MCF 10A (cell line): ENCODE measurements at regions of chr3 and their contacts with region 1.

Region 1: GRCh38 chr3:70120357-70121121 is 121.0 kb downstream of the SAMMSON start:
- DNase-seq: peak; percentile 82
- H3K4me3 Mint-ChIP-seq: no peak overlapping the region
- H3K27ac Mint-ChIP-seq: no peak overlapping the region
- H3K4me1 Mint-ChIP-seq: no peaks in the 10 kb centered on the region
- H3K27me3 Mint-ChIP-seq: peaks cover 63% of the 10 kb centered on the region
- CTCF ChIP-seq: peak; percentile 73

Region 2: DNA sequence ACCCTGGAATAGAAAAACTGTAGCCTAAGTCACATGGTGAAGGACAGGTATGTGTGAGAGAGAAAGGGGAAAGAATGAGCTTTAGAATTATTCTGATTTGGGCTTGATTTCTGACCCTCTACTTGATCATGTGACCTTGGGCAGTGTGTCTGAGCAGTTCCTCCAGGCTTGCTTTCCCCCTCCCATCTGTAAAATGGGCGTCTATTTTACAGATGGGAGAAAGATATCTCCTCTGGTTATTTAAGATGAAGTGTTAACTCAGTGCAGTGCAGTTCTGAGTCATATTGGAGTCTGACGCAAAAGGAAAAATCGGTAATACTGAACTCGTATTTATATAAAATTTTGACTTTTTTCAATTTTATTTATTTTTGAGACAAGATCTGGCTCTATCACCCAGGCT is 960.0 kb before region 1 on chr3:
- CTCF ChIA-PET with region 1: no interaction called
- POLR2A ChIA-PET with region 1: no interaction called
- intact Hi-C with region 1: no loop called
- DNase-seq: no peak
- H3K4me3 Mint-ChIP-seq: no peak overlapping the region
- H3K27ac Mint-ChIP-seq: no peak overlapping the region
- H3K4me1 Mint-ChIP-seq: no peaks in the 10 kb centered on the region
- H3K27me3 Mint-ChIP-seq: no peaks in the 10 kb centered on the region
- CTCF ChIP-seq: no peak

Region 3: DNA sequence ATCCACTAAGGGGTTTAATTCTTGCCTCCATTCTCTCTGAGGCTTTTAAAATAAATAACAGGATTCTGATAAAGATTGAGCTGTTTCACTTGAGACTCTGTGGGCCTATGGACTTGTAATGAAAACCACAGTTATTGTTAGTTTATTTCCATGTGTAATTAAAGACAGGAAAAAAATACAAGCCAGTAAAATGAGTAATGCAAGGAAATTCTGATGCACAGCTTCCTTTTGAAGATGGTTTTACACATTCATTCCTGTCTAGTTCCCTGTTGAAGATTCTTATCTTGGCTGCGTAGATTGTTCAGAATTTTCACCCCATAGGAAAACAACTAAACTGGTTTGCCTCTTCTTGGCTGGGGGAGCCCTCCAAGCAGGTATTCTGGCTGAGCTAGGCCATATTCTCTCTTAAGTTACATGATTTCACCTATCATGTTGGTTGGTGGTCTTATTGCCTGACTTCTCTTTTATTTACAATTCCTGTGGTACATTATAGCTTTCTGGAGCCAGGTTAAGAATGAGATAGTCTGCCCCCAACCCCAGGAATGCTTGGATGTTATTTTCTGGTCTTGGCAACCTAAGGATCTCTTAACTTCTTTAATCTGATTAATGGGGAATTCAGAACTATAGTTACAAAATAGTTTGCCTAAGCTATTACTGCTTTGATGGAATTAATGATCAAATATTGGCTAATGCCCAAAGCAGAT is 313.7 kb before region 1 on chr3:
- CTCF ChIA-PET with region 1: no interaction called
- POLR2A ChIA-PET with region 1: no interaction called
- intact Hi-C with region 1: no loop called
- DNase-seq: no peak
- H3K4me3 Mint-ChIP-seq: no peak overlapping the region
- H3K27ac Mint-ChIP-seq: no peak overlapping the region
- H3K4me1 Mint-ChIP-seq: peaks cover 6% of the 10 kb centered on the region
- H3K27me3 Mint-ChIP-seq: no peaks in the 10 kb centered on the region
- CTCF ChIP-seq: no peak

Region 4: DNA sequence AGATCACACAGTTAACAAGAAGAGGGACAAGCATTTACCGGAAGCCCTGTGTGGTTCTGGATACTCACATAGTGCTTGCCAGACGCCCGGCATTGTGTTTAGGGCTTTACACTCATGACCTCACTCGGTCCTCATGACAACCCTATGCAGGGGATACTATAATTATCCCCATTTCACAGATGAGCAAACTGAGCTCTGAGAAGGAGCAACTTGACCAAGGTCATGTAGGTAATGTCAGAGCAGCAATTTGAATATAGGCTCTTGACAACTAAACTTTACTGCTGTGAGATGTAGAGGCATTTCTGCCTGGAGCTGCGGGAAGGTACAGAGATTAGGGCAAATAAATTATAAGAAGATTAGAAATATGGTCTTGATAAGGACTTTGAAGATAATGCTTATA is 51.0 kb before region 1 on chr3:
- CTCF ChIA-PET with region 1: no interaction called
- POLR2A ChIA-PET with region 1: no interaction called
- intact Hi-C with region 1: no loop called
- DNase-seq: no peak
- H3K4me3 Mint-ChIP-seq: no peak overlapping the region
- H3K27ac Mint-ChIP-seq: no peak overlapping the region
- H3K4me1 Mint-ChIP-seq: no peaks in the 10 kb centered on the region
- H3K27me3 Mint-ChIP-seq: peaks cover 95% of the 10 kb centered on the region
- CTCF ChIP-seq: no peak

Region 5: GRCh38 chr3:70108072-70108471 is 12.5 kb before region 1 on chr3:
- CTCF ChIA-PET with region 1: interaction called, 19 read pairs
- POLR2A ChIA-PET with region 1: no interaction called
- intact Hi-C with region 1: no loop called
- DNase-seq: peak; percentile 53
- H3K4me3 Mint-ChIP-seq: no peak overlapping the region
- H3K27ac Mint-ChIP-seq: no peak overlapping the region
- H3K4me1 Mint-ChIP-seq: no peaks in the 10 kb centered on the region
- H3K27me3 Mint-ChIP-seq: peaks cover 74% of the 10 kb centered on the region
- CTCF ChIP-seq: peak; percentile 31

Region 6: GRCh38 chr3:70358978-70359580 is 238.5 kb after region 1 on chr3:
- CTCF ChIA-PET with region 1: interaction called, 6 read pairs
- POLR2A ChIA-PET with region 1: no interaction called
- intact Hi-C with region 1: loop called (anchors 1 kb)
- DNase-seq: peak; percentile 37
- H3K4me3 Mint-ChIP-seq: no peak overlapping the region
- H3K27ac Mint-ChIP-seq: no peak overlapping the region
- H3K4me1 Mint-ChIP-seq: no peaks in the 10 kb centered on the region
- H3K27me3 Mint-ChIP-seq: peaks cover 74% of the 10 kb centered on the region
- CTCF ChIP-seq: peak; percentile 60

Region 7: GRCh38 chr3:70716832-70717231 is 596.3 kb after region 1 on chr3:
- CTCF ChIA-PET with region 1: no interaction called
- POLR2A ChIA-PET with region 1: no interaction called
- intact Hi-C with region 1: no loop called
- DNase-seq: peak; percentile 28
- H3K4me3 Mint-ChIP-seq: no peak overlapping the region
- H3K27ac Mint-ChIP-seq: no peak overlapping the region
- H3K4me1 Mint-ChIP-seq: no peaks in the 10 kb centered on the region
- H3K27me3 Mint-ChIP-seq: peaks cover 77% of the 10 kb centered on the region
- CTCF ChIP-seq: peak; percentile 34